ENCODE measurements at regions of chr6 and their contacts with region 1.

Region 1: GRCh38 chr6:30541515-30542403 is 14.5 kb downstream of the GNL1 start:
- DNase-seq: no peak
- H3K4me3 ChIP-seq: peak overlapping the region in 3 of 4 donors; percentile 33 to 50 (median 34)
- H3K27ac ChIP-seq: peak overlapping the region in 2 of 4 donors; percentile 45 to 53
- H3K4me1 ChIP-seq: peaks cover 3 to 23% (median 5%) of the 10 kb centered on the region in 3 donors
- H3K27me3 ChIP-seq: no peaks in the 10 kb centered on the region
- CTCF ChIP-seq: peak; percentile 93 to 98 (median 97)
- POLR2A ChIP-seq: no peak

Region 2: GRCh38 chr6:30590994-30591393 is 49.2 kb after region 1 on chr6:
- intact Hi-C with region 1: loop called (anchors 10 kb)
- DNase-seq: no peak
- H3K4me3 ChIP-seq: no peak overlapping the region
- H3K27ac ChIP-seq: peak overlapping the region; percentile 80 to 85 (median 83)
- H3K4me1 ChIP-seq: peaks cover 19 to 52% (median 19%) of the 10 kb centered on the region in 3 donors
- H3K27me3 ChIP-seq: no peaks in the 10 kb centered on the region
- CTCF ChIP-seq: no peak
- POLR2A ChIP-seq: no peak

Region 3: GRCh38 chr6:30664994-30665767 is 123.4 kb after region 1 on chr6:
- intact Hi-C with region 1: no loop called
- DNase-seq: no peak
- H3K4me3 ChIP-seq: no peak overlapping the region
- H3K27ac ChIP-seq: no peak overlapping the region
- H3K4me1 ChIP-seq: no peaks in the 10 kb centered on the region
- H3K27me3 ChIP-seq: no peaks in the 10 kb centered on the region
- CTCF ChIP-seq: no peak
- POLR2A ChIP-seq: no peak

Measured in esophagus squamous epithelium (tissue), 5 donors.